HEK293 (cell line): ENCODE measurements at regions of chr9 and their contacts with region 1.

Region 1: DNA sequence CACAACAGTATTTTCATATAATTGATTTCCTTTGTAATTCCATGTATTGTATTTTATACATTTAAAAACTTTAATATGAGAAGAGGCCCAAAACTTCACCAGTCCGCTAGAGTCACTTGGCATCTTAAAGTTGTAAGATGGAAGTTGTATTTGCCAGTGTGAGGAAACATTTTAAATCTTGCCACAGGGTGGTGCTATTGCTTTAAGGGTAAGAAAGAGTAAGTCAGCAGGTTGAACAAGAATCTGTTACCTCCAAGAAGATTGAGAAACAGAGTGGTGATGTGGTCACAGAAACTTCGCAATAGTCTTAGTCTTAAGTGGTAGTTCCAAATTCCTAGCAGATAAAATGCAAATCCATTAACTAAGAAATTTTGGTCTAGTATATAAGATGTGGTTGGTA is 39.8 kb upstream of the RANBP6 start:
- H3K4me3 ChIP-seq: no peak overlapping the region
- H3K27ac ChIP-seq: no peak overlapping the region
- H3K4me1 ChIP-seq: no peaks in the 10 kb centered on the region
- CTCF ChIP-seq: no peak

Region 2: DNA sequence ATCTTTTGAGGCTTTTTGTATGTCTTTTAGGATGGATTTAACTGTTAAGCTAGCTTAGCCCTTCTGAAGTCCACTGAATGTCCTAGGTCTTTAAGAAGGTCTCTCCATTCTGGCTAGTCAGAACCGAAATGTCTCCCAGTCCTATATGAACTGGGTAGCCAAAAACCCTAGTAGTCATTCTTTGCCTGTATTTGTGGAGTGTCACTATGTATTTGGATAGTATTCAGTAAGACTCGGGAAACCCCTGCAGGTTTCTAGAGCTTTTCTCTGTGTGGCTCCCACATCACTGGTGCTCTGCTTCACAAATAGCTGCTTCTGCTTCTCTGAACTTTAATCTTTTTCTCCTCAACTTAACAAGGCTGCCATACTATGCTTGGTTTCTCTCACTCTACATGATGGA is 358.3 kb before region 1 on chr9:
- CTCF ChIA-PET with region 1: no interaction called
- POLR2A ChIA-PET with region 1: no interaction called
- H3K4me3 ChIP-seq: no peak overlapping the region
- H3K27ac ChIP-seq: no peak overlapping the region
- H3K4me1 ChIP-seq: peaks cover 8% of the 10 kb centered on the region; the same call in 1 of the 2 replicates
- CTCF ChIP-seq: no peak

Region 3: DNA sequence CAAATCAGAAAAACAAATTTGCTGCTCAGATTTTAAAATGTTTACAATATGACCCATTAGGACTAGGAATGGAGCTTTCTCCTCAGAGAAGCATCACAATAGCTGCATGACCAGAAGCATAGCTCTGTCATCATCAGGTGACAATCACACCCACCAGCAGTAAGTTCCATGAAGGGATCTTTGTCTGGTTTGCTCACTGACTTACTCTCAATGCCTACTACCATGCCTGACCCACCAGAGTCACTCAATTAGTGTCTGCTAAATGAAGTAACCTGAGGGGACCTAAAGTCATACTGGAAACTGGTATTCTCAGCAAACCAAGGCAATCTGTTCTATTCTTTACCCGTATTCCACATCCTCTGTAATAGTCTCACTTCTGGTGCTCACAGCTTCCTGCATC is 230.0 kb before region 1 on chr9:
- CTCF ChIA-PET with region 1: no interaction called
- POLR2A ChIA-PET with region 1: no interaction called
- H3K4me3 ChIP-seq: no peak overlapping the region
- H3K27ac ChIP-seq: no peak overlapping the region
- H3K4me1 ChIP-seq: no peaks in the 10 kb centered on the region
- CTCF ChIP-seq: no peak

Region 4: GRCh38 chr9:5879419-5880181 is 175.6 kb before region 1 on chr9:
- CTCF ChIA-PET with region 1: interaction called, 77 read pairs
- POLR2A ChIA-PET with region 1: no interaction called
- H3K4me3 ChIP-seq: peak overlapping the region; percentile 19
- H3K27ac ChIP-seq: no peak overlapping the region
- H3K4me1 ChIP-seq: no peaks in the 10 kb centered on the region
- CTCF ChIP-seq: no peak

Region 5: DNA sequence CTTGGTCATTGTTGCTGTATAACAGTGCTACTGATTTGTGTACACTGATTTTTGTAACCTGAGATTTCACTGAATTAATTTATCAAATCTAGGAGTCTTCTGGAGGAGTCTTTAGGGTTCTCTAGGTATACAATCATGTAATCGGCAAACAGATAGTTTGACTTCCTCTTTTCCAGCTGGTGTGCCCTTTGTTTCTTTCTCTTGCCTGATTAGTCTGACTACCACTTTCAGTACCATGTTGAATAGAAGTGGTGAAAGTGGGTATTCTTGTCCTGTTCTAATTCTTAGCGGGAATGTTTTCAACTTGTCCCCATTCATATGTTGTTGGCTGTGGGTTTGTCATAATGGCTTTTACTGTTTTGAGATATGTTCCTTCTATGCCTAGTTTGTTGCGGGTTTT is 15.1 kb before region 1 on chr9:
- CTCF ChIA-PET with region 1: interaction called, 12 read pairs
- POLR2A ChIA-PET with region 1: no interaction called
- H3K4me3 ChIP-seq: no peak overlapping the region
- H3K27ac ChIP-seq: no peak overlapping the region
- H3K4me1 ChIP-seq: no peaks in the 10 kb centered on the region
- CTCF ChIP-seq: no peak

Region 6: DNA sequence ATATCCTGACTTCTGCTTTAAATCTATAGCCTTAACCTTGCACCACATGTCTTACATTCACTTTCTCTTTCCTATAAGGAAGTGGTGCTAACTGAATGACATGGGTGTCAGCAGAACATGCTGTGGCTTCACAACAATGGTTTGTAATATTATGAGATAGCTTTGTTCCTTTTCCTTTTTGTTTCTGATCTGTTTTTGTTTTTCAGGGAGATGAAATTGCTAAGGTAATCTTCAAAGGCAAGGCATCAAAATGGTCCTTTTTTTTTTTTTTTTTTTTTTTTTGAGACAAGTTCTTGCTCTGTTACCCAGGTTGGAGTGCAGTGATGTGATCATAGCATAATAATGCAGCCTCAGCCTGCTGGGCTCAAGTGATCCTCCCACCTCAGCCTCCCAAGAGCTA is 13.8 kb after region 1 on chr9:
- CTCF ChIA-PET with region 1: interaction called, 11 read pairs
- POLR2A ChIA-PET with region 1: no interaction called
- H3K4me3 ChIP-seq: no peak overlapping the region
- H3K27ac ChIP-seq: no peak overlapping the region
- H3K4me1 ChIP-seq: no peaks in the 10 kb centered on the region
- CTCF ChIP-seq: no peak

Region 7: DNA sequence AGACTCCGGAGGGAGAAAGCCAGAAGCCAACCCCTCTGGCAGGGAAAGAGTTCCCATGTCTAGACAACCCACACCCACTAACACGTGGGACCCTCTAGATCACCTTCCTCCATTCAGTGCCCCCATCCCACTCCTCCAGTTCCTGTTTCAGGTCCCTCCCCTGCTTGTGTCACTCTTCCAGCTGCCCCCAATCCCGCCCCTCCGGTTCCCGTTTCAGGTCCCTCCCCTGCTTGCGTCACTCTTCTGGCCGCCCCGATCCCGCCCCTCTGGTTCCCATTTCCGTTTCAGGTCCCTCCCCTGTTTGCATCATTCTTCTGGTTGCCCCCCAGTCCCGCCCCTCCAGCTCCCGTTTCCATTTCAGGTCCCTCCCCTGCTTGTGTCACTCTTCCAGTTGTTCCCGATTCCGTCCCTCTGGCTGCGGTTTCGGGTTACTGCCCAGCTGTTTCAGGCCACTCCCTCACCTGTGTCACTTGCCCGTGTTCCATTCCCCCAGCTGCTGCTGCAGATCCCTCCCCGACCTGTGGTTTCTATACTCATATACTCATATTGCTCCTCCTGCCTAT is 25.0 kb after region 1 on chr9:
- CTCF ChIA-PET with region 1: no interaction called
- POLR2A ChIA-PET with region 1: no interaction called
- H3K4me3 ChIP-seq: peak overlapping the region; percentile 36
- H3K27ac ChIP-seq: no peak overlapping the region
- H3K4me1 ChIP-seq: no peaks in the 10 kb centered on the region
- CTCF ChIP-seq: 0 out of 2 replicates have a peak, but pooled peaks have one; percentile 3

Region 8: DNA sequence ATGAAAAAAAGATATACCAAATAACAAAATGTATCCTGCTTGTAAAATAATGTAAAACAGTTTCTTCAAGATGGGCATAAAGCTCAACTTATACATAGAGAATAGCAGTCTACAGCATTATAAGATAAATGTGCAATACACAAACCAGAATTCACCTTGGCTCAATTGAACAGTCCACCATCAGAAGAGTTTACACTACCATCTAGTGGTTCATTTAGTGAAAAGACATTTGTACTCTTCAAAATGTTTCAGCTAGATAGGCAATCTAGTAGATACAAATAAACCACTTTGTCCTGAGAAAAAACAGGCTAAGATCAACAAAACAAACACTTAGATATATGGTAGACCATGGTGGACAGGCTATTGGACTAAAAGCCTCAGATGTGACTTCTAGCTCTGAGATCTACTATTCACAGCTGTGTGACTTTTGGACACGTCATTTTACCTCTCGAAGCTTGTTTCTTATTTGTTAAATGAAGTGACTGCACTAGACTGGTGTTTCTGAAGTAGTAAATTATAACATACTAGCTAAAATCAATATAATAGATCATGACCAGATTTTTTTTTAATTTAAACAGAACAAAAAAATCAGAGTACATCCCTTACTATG is 250.8 kb after region 1 on chr9:
- CTCF ChIA-PET with region 1: interaction called, 67 read pairs
- POLR2A ChIA-PET with region 1: interaction called, 3 read pairs
- H3K4me3 ChIP-seq: no peak overlapping the region
- H3K27ac ChIP-seq: no peak overlapping the region
- H3K4me1 ChIP-seq: no peaks in the 10 kb centered on the region
- CTCF ChIP-seq: 0 out of 2 replicates have a peak, but pooled peaks have one; percentile 24